CD8-positive, alpha-beta T cell (primary cell): ENCODE measurements at regions of chr9 and their contacts with region 1.

Region 1: GRCh38 chr9:12494456-12494855 is 198.7 kb upstream of the TYRP1 start:
- DNase-seq: no peak
- ATAC-seq: no peak
- H3K4me3 ChIP-seq: no peak overlapping the region
- H3K4me3 Mint-ChIP-seq: no peak overlapping the region
- H3K27ac ChIP-seq: no peak overlapping the region
- H3K27ac Mint-ChIP-seq: no peak overlapping the region
- H3K4me1 ChIP-seq: no peaks in the 10 kb centered on the region
- H3K4me1 Mint-ChIP-seq: no peaks in the 10 kb centered on the region
- H3K27me3 ChIP-seq: no peaks in the 10 kb centered on the region
- H3K27me3 Mint-ChIP-seq: no peaks in the 10 kb centered on the region
- CTCF ChIP-seq: no peak

Region 2: GRCh38 chr9:12538842-12539579 is 44.6 kb after region 1 on chr9:
- CTCF ChIA-PET with region 1: no interaction called
- POLR2A ChIA-PET with region 1: no interaction called
- intact Hi-C with region 1: loop called in 1 of 2 experiments (anchors 5 kb)
- DNase-seq: no peak
- ATAC-seq: no peak
- H3K4me3 ChIP-seq: no peak overlapping the region
- H3K4me3 Mint-ChIP-seq: no peak overlapping the region
- H3K27ac ChIP-seq: no peak overlapping the region
- H3K27ac Mint-ChIP-seq: no peak overlapping the region
- H3K4me1 ChIP-seq: no peaks in the 10 kb centered on the region
- H3K4me1 Mint-ChIP-seq: no peaks in the 10 kb centered on the region
- H3K27me3 ChIP-seq: no peaks in the 10 kb centered on the region
- H3K27me3 Mint-ChIP-seq: no peaks in the 10 kb centered on the region
- CTCF ChIP-seq: no peak

Region 3: DNA sequence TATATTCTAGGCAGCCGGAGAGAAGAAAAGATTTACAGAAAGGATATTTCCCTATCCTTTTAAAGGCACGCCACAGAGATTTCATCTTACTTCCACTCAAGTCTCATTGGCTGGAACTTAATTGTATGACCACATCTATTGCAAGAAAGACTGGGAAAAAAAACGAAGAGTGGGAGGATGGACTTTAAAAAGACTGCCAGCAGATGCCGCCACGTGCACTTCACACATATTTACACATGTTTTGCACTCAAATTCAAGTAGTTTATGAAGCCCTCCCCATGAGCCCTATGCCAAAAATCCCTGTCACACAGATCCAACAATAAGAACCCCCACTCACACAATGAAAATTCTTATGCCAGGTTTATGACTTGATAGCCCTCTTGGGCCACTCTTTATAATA is 60.2 kb after region 1 on chr9:
- CTCF ChIA-PET with region 1: no interaction called
- POLR2A ChIA-PET with region 1: no interaction called
- intact Hi-C with region 1: loop called in 1 of 2 experiments (anchors 10 kb)
- DNase-seq: no peak
- ATAC-seq: no peak
- H3K4me3 ChIP-seq: no peak overlapping the region
- H3K4me3 Mint-ChIP-seq: no peak overlapping the region
- H3K27ac ChIP-seq: no peak overlapping the region
- H3K27ac Mint-ChIP-seq: no peak overlapping the region
- H3K4me1 ChIP-seq: no peaks in the 10 kb centered on the region
- H3K4me1 Mint-ChIP-seq: no peaks in the 10 kb centered on the region
- H3K27me3 ChIP-seq: no peaks in the 10 kb centered on the region
- H3K27me3 Mint-ChIP-seq: no peaks in the 10 kb centered on the region
- CTCF ChIP-seq: no peak